ENCODE measurements at regions of chr20 and their contacts with region 1.

Region 1: GRCh38 chr20:2470423-2471193 is at the start of gene SNRPB:
- DNase-seq: peak; percentile 95 to 99 (median 98)
- H3K4me3 ChIP-seq: peak within 1 kb of the TSS; percentile 53 to 97 (median 85)
- H3K27ac ChIP-seq: peak within 1 kb of the TSS; percentile 75 to 99 (median 93)
- H3K27me3 ChIP-seq: no peaks in the 10 kb centered on the region
- CTCF ChIP-seq: peak in 28 of 56 donors; percentile 4 to 59 (median 28)
- total RNA-seq, gene SNRPB: 24.3 to 63.9 (median 44.4) TPM

Region 2: GRCh38 chr20:2101865-2102584 is 368.6 kb before region 1 on chr20:
- intact Hi-C with region 1: loop called (anchors 5 to 10 kb)
- DNase-seq: peak; percentile 84 to 92 (median 90)
- H3K4me3 ChIP-seq: peak overlapping the region; percentile 64 to 99 (median 93)
- H3K27ac ChIP-seq: peak overlapping the region; percentile 96 to 100 (median 100)
- H3K27me3 ChIP-seq: no peaks in the 10 kb centered on the region
- CTCF ChIP-seq: peak in 15 of 56 donors; percentile 4 to 40 (median 12)

Region 3: GRCh38 chr20:2330090-2330695 is 140.4 kb before region 1 on chr20:
- intact Hi-C with region 1: no loop called
- DNase-seq: no peak
- H3K4me3 ChIP-seq: no peak overlapping the region
- H3K27ac ChIP-seq: no peak overlapping the region
- H3K27me3 ChIP-seq: peaks cover 0 to 3% (median 0%) of the 10 kb centered on the region in 45 donors
- CTCF ChIP-seq: no peak

Region 4: DNA sequence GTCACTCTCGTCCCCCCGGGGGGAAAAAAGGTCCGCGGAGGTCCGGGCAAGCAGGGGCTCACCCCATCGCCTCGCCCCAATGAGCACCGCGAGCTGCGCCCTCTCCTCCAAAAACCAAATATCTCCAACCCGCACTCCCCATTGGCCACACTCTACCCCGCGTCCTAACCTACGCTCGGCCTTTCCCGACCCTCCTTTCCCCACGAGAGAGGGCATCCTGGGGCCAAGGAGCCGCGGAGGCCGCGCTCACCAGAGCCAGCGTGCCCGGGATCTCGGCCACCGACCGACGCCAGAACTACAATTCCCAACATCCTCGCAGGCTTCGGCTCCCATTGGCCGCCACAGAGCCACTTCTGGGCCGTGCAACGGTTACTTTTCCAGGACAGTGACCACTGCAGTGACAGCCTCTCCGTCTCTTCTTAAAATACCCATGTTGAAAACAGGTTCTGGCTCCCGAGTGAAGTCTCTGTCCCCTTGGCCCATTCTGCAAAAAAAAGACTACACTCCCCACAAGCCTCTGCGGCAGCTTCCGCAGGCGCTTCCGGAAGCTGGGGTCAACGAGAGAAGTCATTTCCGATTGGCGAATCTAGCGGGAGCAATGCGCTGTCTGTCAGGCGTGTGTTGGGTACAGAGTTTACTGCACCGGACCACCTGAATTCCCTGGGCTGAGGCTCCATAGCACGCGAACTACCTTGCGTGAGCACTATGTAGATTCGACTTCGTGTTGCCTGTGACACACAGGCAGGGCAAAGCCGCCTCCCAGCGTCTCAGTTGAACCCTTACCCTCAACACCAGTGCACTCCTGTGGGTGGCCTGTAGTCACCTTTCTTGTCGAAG is 38.2 kb after region 1 on chr20 and contains the start of gene ZNF343:
- intact Hi-C with region 1: loop called (anchors 2 to 5 kb)
- DNase-seq: peak; percentile 64 to 88 (median 82)
- H3K4me3 ChIP-seq: peak within 1 kb of the TSS; percentile 68 to 100 (median 91)
- H3K27ac ChIP-seq: peak within 1 kb of the TSS; percentile 68 to 99 (median 95)
- H3K27me3 ChIP-seq: no peaks in the 10 kb centered on the region
- CTCF ChIP-seq: peak in 29 of 56 donors; percentile 2 to 51 (median 23)
- total RNA-seq, gene ZNF343: 12.5 to 26.7 (median 19.8) TPM

Region 5: DNA sequence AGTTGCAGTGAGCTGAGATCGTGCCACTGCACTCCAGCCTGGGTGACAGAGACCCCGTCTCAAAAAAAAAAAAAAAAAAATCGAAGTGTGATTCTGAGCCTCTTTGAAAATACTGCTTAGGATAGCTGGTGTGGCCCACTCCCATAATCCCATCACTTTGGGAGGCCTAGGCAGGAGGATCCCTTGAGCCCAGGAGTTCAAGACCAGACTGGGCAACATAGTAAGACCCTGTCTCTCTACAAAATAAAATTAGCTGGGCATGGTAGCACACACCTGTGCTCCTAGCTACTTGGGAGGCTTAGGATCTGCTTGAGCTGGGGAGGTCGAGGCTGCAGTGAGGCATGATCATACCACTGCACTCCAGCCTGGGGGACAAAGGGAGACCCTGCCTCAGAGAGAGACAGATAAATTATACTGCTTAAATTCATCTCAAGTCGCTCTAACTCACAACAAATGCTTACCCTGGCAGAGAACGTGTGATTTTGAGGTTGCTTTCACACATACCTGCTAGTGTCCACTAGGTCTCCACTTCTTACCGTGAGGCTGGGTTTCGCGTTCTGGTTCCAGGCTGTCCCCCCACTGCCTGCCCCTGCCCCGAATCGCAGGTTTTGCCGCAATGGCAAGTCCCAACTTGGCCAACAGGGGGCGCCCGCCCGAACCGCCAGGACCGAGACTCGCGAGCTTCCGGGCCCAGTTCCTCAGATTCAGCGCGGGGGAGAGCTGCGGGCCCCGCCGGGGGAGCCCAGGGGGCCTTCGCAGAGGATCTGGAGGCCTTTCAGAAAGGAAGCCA is 53.5 kb after region 1 on chr20:
- intact Hi-C with region 1: loop called in 1 of 2 experiments (anchors 5 kb)
- DNase-seq: peak; percentile 79 to 94 (median 89)
- H3K4me3 ChIP-seq: peak overlapping the region; percentile 64 to 98 (median 82)
- H3K27ac ChIP-seq: peak overlapping the region; percentile 58 to 97 (median 89)
- H3K27me3 ChIP-seq: no peaks in the 10 kb centered on the region
- CTCF ChIP-seq: peak; percentile 83 to 100 (median 96)

Region 6: GRCh38 chr20:2651772-2652723 is 181.4 kb after region 1 on chr20 and contains the start of gene NOP56:
- intact Hi-C with region 1: loop called (anchors 5 kb)
- DNase-seq: peak; percentile 83 to 97 (median 90)
- H3K4me3 ChIP-seq: peak within 1 kb of the TSS; percentile 65 to 100 (median 95)
- H3K27ac ChIP-seq: peak within 1 kb of the TSS; percentile 73 to 99 (median 96)
- H3K27me3 ChIP-seq: no peaks in the 10 kb centered on the region
- CTCF ChIP-seq: peak in 22 of 56 donors; percentile 1 to 51 (median 14)
- total RNA-seq, gene NOP56: 70.3 to 199 (median 141) TPM

Region 7: GRCh38 chr20:2658414-2659354 is 188.1 kb after region 1 on chr20:
- intact Hi-C with region 1: loop called (anchors 5 kb)
- DNase-seq: no peak
- H3K4me3 ChIP-seq: no peak overlapping the region
- H3K27ac ChIP-seq: no peak overlapping the region
- H3K27me3 ChIP-seq: no peaks in the 10 kb centered on the region
- CTCF ChIP-seq: no peak